ENCODE measurements at regions of chr18 and their contacts with region 1.

Region 1: GRCh38 chr18:59459369-59460079 is 100.5 kb upstream of the LMAN1 start:
- DNase-seq: no peak
- H3K4me3 ChIP-seq: no peak overlapping the region
- H3K27ac ChIP-seq: no peak overlapping the region
- H3K4me1 ChIP-seq: peaks cover 0 to 4% of the 10 kb centered on the region in 2 donors
- H3K27me3 ChIP-seq: no peaks in the 10 kb centered on the region
- CTCF ChIP-seq: peak; percentile 53 to 55 (median 53)
- POLR2A ChIP-seq: no peak

Region 2: GRCh38 chr18:60873708-60874107 is 1414.2 kb after region 1 on chr18:
- intact Hi-C with region 1: no loop called
- DNase-seq: no peak
- H3K4me3 ChIP-seq: no peak overlapping the region
- H3K27ac ChIP-seq: no peak overlapping the region
- H3K4me1 ChIP-seq: no peaks in the 10 kb centered on the region
- H3K27me3 ChIP-seq: no peaks in the 10 kb centered on the region
- CTCF ChIP-seq: no peak
- POLR2A ChIP-seq: no peak

Region 3: GRCh38 chr18:61169386-61169785 is 1709.9 kb after region 1 on chr18:
- intact Hi-C with region 1: loop called (anchors 10 kb)
- DNase-seq: no peak
- H3K4me3 ChIP-seq: no peak overlapping the region
- H3K27ac ChIP-seq: no peak overlapping the region
- H3K4me1 ChIP-seq: no peaks in the 10 kb centered on the region
- H3K27me3 ChIP-seq: no peaks in the 10 kb centered on the region
- CTCF ChIP-seq: no peak
- POLR2A ChIP-seq: no peak